ENCODE measurements at regions of chr5 and their contacts with region 1.

Region 1: GRCh38 chr5:40700116-40700782 is 20.5 kb downstream of the PTGER4 start:
- DNase-seq: no peak
- ATAC-seq: peak; percentile 49
- H3K4me3 ChIP-seq: no peak overlapping the region
- H3K27ac ChIP-seq: no peak overlapping the region
- H3K4me1 ChIP-seq: no peaks in the 10 kb centered on the region
- H3K27me3 ChIP-seq: no peaks in the 10 kb centered on the region; a peak in 1 of 5 replicates
- CTCF ChIP-seq: no peak
- EP300 ChIP-seq: no peak
- POLR2A ChIP-seq: no peak
- RAD21 ChIP-seq: no peak

Region 2: DNA sequence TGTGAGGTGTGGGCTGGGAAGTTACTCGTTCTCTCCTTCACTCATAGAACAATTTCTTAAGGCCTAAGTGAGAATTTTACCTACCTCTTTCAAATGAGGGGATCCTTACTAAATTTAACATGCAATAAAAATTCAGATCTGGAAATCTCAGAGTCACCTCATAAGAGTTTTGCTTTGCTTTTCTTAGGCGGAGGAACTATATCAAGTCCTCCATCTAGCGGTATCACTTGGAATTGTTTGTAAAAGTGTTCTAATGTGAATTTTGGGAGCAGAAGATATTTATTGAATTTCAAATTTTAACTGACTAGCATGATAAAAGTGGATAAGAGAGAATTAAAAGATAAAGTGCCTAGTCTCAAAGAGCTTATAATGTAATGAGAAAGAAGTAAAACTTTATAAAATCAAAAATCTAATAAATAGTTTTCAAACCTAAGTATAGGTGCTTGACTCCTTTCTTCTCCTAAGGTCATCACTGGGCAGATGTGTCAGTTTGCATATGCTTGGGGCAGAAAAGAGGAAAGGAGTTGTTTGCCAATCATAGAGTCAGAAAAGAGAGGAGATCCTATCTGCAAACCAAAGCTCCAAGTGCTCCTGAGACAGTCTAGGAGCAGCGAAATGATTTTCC is 1129.7 kb before region 1 on chr5:
- CTCF ChIA-PET with region 1: no interaction called
- POLR2A ChIA-PET with region 1: no interaction called
- in situ Hi-C with region 1: loop called (anchors 10 kb)
- intact Hi-C with region 1: no loop called
- DNase-seq: peak; percentile 20 to 43 (median 24)
- ATAC-seq: 0 out of 3 replicates have a peak, but pooled peaks have one; percentile 45
- H3K4me3 ChIP-seq: no peak overlapping the region
- H3K27ac ChIP-seq: no peak overlapping the region
- H3K4me1 ChIP-seq: no peaks in the 10 kb centered on the region
- H3K27me3 ChIP-seq: no peaks in the 10 kb centered on the region
- CTCF ChIP-seq: peak; percentile 39 to 70 (median 55); a peak in 4 of 6 replicates
- EP300 ChIP-seq: no peak
- POLR2A ChIP-seq: no peak
- RAD21 ChIP-seq: peak; percentile 76 to 81